MCF 10A (cell line): ENCODE measurements at regions of chr11 and their contacts with region 1.

Region 1: DNA sequence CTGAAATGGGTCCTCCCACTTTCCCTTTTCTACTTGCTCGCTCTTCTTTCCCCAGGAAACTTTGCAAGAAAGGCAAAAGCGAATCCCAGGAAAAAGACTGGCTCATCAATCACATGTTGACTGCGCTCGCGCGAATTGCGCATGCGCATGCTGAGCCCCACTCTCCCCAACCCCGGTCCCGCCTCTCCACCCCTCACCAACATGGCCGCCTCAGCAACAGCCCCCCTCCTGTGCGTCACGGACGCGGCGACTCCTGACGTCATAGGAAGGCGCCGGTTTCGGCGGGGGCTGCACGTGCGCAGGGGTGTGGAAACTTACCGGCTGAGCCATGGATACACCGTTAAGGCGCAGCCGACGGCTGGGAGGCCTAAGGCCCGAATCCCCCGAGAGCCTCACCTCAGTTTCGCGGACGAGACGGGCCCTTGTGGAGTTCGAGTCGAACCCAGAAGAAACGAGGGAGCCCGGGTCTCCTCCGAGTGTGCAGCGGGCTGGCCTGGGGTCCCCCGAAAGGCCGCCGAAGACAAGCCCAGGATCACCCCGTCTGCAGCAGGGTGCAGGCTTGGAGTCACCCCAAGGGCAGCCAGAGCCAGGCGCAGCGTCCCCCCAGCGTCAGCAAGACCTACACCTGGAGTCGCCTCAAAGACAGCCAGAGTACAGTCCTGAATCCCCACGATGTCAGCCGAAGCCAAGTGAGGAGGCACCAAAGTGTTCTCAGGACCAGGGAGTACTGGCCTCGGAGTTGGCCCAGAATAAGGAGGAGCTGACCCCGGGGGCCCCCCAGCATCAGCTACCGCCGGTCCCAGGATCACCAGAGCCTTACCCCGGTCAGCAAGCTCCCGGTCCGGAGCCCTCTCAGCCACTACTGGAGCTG is at the start of gene CCDC86:
- DNase-seq: peak; percentile 94
- H3K4me3 Mint-ChIP-seq: peak within 1 kb of the TSS; percentile 91
- H3K27ac Mint-ChIP-seq: peak within 1 kb of the TSS; percentile 92
- H3K4me1 Mint-ChIP-seq: peaks cover 42% of the 10 kb centered on the region
- H3K27me3 Mint-ChIP-seq: no peaks in the 10 kb centered on the region
- CTCF ChIP-seq: no peak
- total RNA-seq, gene CCDC86: 37.5 and 57.8 TPM in 2 replicates

Region 2: DNA sequence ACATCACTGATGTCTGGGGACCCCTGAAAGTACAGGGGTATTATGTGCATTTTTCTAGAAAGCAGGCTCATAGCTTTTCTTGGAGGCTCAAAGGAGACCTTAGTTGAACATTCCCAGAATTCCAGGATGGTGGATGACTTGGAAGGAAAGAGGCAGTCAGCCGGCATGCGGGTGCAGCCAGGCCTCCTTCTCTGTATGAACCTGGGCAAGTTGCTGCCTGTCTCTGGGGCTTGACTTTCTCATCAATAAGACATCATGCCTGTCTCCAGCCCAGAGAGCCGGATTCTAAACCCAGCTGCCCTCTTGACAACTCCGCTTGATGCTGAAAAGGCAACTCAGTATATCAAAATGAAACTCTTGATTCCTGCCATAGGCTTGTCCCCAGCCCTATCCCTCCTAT is 72.8 kb before region 1 on chr11:
- CTCF ChIA-PET with region 1: no interaction called
- POLR2A ChIA-PET with region 1: no interaction called
- intact Hi-C with region 1: no loop called
- DNase-seq: no peak
- H3K4me3 Mint-ChIP-seq: no peak overlapping the region
- H3K27ac Mint-ChIP-seq: no peak overlapping the region
- H3K4me1 Mint-ChIP-seq: peaks cover 1% of the 10 kb centered on the region
- H3K27me3 Mint-ChIP-seq: no peaks in the 10 kb centered on the region
- CTCF ChIP-seq: no peak

Region 3: DNA sequence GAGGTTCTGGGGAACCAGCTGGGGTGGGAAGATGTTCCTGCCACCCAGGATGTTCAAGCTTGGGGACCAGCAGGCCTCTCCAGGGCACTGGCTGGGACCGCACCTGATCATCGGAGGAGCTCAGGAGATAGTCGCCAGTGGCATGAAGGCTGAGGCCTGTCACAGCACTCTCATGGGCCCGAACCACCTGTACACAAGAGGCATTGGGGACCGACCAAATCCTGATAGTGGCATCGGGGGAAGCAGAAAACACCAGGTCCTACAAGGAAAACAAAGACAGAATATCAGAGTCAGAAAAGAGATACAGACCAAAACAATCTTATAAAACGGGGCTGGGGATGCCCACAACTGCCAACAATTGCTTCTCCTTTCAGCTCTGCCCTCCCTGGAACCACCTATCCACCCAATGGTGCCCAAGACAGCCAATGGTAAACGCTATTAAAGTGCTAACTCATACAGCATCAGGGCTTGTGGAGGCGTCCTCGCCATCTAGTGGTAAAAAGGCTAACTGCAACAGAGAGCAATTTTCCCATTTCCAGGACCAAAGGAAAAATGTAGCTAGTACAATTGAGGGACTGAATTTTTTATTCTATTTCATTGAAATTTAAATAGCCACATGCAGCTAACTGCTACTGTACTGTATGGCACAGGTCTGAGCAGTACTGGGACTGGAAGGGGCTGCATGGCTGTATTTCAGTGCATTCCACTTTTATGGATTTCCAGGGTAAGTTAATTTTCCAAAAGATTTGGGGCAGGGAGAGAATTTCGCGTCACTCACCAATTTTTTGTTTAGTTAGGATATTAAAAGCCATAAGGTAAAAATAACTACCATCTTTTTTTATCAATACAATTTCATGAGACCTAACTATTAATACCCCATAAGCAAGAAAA is 57.3 kb after region 1 on chr11:
- CTCF ChIA-PET with region 1: interaction called, 21 read pairs
- POLR2A ChIA-PET with region 1: interaction called, 26 read pairs
- intact Hi-C with region 1: no loop called
- DNase-seq: peak; percentile 64
- H3K4me3 Mint-ChIP-seq: no peak overlapping the region
- H3K27ac Mint-ChIP-seq: no peak overlapping the region
- H3K4me1 Mint-ChIP-seq: peaks cover 5% of the 10 kb centered on the region
- H3K27me3 Mint-ChIP-seq: no peaks in the 10 kb centered on the region
- CTCF ChIP-seq: peak; percentile 92

Region 4: GRCh38 chr11:60906132-60906972 is 64.3 kb after region 1 on chr11 and contains the start of gene PRPF19:
- CTCF ChIA-PET with region 1: interaction called, 21 read pairs
- POLR2A ChIA-PET with region 1: interaction called, 26 read pairs
- intact Hi-C with region 1: no loop called
- DNase-seq: peak; percentile 97
- H3K4me3 Mint-ChIP-seq: peak within 1 kb of the TSS; percentile 87
- H3K27ac Mint-ChIP-seq: peak within 1 kb of the TSS; percentile 70
- H3K4me1 Mint-ChIP-seq: peaks cover 9% of the 10 kb centered on the region
- H3K27me3 Mint-ChIP-seq: peaks cover 11% of the 10 kb centered on the region
- CTCF ChIP-seq: no peak
- total RNA-seq, gene PRPF19: 99.0 and 115 TPM in 2 replicates